ENCODE measurements at regions of chr16 and their contacts with region 1.

Region 1: DNA sequence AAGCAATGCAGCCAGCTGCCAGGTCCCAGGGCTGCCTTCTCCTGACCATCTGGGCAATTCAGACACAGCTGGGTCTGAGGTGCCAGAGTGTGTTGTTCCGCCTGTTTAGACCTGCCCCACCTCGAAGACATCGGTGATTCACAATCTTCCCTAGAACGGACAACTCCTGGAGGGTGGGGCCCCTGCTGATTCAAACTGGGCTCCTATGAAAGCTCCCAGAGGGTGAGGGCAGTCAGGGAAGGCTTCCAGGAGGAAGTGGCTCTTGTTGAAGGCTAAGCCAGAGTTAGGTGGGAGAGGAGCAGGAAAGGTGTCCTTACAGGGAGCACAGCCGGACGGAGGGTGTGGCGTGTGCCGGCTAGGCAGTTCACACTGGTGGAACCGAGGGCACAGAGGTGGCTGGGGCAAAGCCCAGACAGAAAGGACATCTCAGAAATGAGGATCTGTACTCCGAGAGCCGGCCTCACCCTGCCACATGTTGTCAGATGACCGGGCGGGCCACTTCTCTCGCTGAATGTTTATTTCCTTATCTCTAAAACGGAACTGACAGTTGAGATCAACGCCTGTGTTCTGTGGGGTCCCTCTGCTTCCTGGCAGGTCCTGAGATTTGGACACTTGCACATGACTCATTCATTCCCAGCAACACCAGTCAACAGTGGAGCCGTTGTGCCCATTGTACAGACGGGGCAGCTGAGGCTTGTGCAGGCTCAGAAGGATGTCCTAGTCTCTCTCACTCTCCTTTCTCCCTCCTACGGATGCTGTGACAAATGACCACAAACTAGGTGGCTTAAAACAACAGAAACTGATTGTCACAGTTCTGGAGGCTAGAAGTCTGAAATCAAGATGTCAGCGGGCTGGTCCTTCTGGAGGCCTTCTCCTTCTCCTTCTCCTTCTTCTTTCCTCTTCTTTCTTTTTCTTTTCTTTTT is 26.9 kb upstream of the LITAF start:
- DNase-seq: no peak
- ATAC-seq: no peak
- H3K4me3 Mint-ChIP-seq: peak overlapping the region in 3 of 10 donors; percentile 14 to 62 (median 18)
- H3K27ac Mint-ChIP-seq: peak overlapping the region in 9 of 10 donors; percentile 36 to 89 (median 68)
- H3K4me1 Mint-ChIP-seq: peaks cover 18 to 79% (median 72%) of the 10 kb centered on the region in 4 donors
- H3K27me3 Mint-ChIP-seq: no peaks in the 10 kb centered on the region

Region 2: GRCh38 chr16:11575223-11575589 is 38.4 kb before region 1 on chr16:
- POLR2A ChIA-PET with region 1: no interaction called
- DNase-seq: no peak
- ATAC-seq: peak in 1 of 2 donors; percentile 19
- H3K4me3 Mint-ChIP-seq: peak overlapping the region; percentile 60 to 88 (median 76)
- H3K27ac Mint-ChIP-seq: peak overlapping the region; percentile 87 to 98 (median 95)
- H3K4me1 Mint-ChIP-seq: peaks cover 33 to 93% (median 89%) of the 10 kb centered on the region in 4 donors
- H3K27me3 Mint-ChIP-seq: no peaks in the 10 kb centered on the region

Region 3: GRCh38 chr16:11658894-11659708 is 45.5 kb after region 1 on chr16:
- POLR2A ChIA-PET with region 1: interaction called, 11 read pairs
- DNase-seq: no peak
- ATAC-seq: no peak
- H3K4me3 Mint-ChIP-seq: no peak overlapping the region
- H3K27ac Mint-ChIP-seq: peak overlapping the region in 1 of 10 donors; percentile 38
- H3K4me1 Mint-ChIP-seq: peaks cover 15 to 28% (median 24%) of the 10 kb centered on the region in 4 donors
- H3K27me3 Mint-ChIP-seq: no peaks in the 10 kb centered on the region